Naive thymus-derived CD8-positive, alpha-beta T cell (primary cell): ENCODE measurements at regions of chr22 and their contacts with region 1.

Region 1: GRCh38 chr22:40533712-40534378 is 102.7 kb downstream of the MRTFA start:
- DNase-seq: peak in 9 of 10 donors; percentile 27 to 79 (median 66)
- ATAC-seq: peak; percentile 96 to 99
- H3K4me3 Mint-ChIP-seq: peak overlapping the region; percentile 77 to 93 (median 84)
- H3K27ac Mint-ChIP-seq: peak overlapping the region; percentile 59 to 95 (median 90)
- H3K4me1 Mint-ChIP-seq: peaks cover 30 to 69% (median 59%) of the 10 kb centered on the region in 4 donors
- H3K27me3 Mint-ChIP-seq: no peaks in the 10 kb centered on the region

Region 2: GRCh38 chr22:40636380-40637182 is 102.7 kb after region 1 on chr22 and contains the start of gene MRTFA:
- POLR2A ChIA-PET with region 1: interaction called, 17 read pairs
- DNase-seq: peak; percentile 95 to 100 (median 99)
- ATAC-seq: peak; percentile 92 to 95
- H3K4me3 Mint-ChIP-seq: peak within 1 kb of the TSS; percentile 92 to 98 (median 96)
- H3K27ac Mint-ChIP-seq: peak within 1 kb of the TSS; percentile 93 to 98 (median 96)
- H3K4me1 Mint-ChIP-seq: peaks cover 21 to 43% (median 38%) of the 10 kb centered on the region in 4 donors
- H3K27me3 Mint-ChIP-seq: no peaks in the 10 kb centered on the region
- polyA plus RNA-seq, gene MRTFA: 10.7 to 31.0 (median 21.8) TPM